ENCODE measurements at regions of chr5 and their contacts with region 1.

Region 1: GRCh38 chr5:139968547-139969261 is 74.4 kb downstream of the NRG2 start:
- DNase-seq: peak; percentile 74 to 99
- H3K4me3 ChIP-seq: no peak overlapping the region
- H3K27ac ChIP-seq: no peak overlapping the region
- H3K4me1 ChIP-seq: no peaks in the 10 kb centered on the region
- H3K27me3 ChIP-seq: no peaks in the 10 kb centered on the region; a peak in 1 of 7 replicates
- CTCF ChIP-seq: peak; percentile 100
- EP300 ChIP-seq: peak in 1 of 2 experiments; percentile 55; a peak in 1 of 3 replicates
- POLR2A ChIP-seq: no peak
- RAD21 ChIP-seq: peak; percentile 99 to 100

Region 2: DNA sequence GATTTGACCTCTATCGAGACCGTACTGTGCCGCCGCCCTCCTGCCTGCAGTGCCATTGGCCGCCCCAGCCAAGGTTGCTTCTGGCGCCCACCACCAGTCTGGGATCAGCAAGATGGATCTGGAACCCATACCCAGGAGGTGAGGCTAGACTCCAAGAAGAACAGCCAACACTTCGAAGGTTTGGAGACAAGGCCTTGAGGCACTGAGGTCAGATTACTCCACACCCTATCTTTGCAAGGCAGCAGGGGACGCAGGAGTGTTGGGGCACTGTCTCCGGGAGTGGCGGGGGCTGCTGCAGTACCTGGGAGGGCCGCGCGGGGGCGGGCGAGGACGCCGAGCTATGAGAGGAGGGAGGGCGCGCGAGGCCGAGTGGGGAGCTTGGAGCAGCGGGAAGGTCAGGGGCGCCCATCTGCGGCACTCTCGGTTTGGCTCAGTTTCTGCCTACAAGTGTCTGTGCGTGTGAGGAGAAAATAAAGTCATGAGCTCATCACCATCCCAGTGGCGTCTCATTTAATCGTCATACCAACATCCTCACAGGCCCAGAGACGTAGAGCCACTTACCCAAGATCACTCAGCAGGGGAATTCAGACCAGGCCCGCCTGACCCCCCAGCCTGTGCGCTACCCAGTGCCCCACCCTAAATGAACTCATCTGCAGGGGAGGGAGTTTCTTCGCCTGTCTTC is 193.6 kb before region 1 on chr5:
- CTCF ChIA-PET with region 1: interaction called, 35 read pairs
- POLR2A ChIA-PET with region 1: interaction called, 3 read pairs
- DNase-seq: peak; percentile 63 to 100
- H3K4me3 ChIP-seq: peak overlapping the region in 1 of 4 experiments; percentile 28; a peak in 1 of 8 replicates
- H3K27ac ChIP-seq: no peak overlapping the region
- H3K4me1 ChIP-seq: peaks cover 0 to 5% (median 4%) of the 10 kb centered on the region in 4 experiments; a peak in 4 of 7 replicates
- H3K27me3 ChIP-seq: peaks cover 0 to 5% (median 2%) of the 10 kb centered on the region in 4 experiments; a peak in 3 of 7 replicates
- CTCF ChIP-seq: peak in 2 of 3 experiments; percentile 96 to 97; a peak in 3 of 4 replicates
- EP300 ChIP-seq: no peak
- POLR2A ChIP-seq: no peak
- RAD21 ChIP-seq: peak; percentile 61 to 73

Region 3: GRCh38 chr5:139837631-139838422 is 130.9 kb before region 1 on chr5:
- CTCF ChIA-PET with region 1: interaction called, 66 read pairs
- POLR2A ChIA-PET with region 1: no interaction called
- DNase-seq: no peak
- H3K4me3 ChIP-seq: no peak overlapping the region
- H3K27ac ChIP-seq: no peak overlapping the region
- H3K4me1 ChIP-seq: no peaks in the 10 kb centered on the region
- H3K27me3 ChIP-seq: peaks cover 0 to 4% (median 0%) of the 10 kb centered on the region in 4 experiments; a peak in 2 of 7 replicates
- CTCF ChIP-seq: peak in 1 of 3 experiments; percentile 8; a peak in 1 of 4 replicates
- EP300 ChIP-seq: no peak
- POLR2A ChIP-seq: no peak
- RAD21 ChIP-seq: no peak

Region 4: DNA sequence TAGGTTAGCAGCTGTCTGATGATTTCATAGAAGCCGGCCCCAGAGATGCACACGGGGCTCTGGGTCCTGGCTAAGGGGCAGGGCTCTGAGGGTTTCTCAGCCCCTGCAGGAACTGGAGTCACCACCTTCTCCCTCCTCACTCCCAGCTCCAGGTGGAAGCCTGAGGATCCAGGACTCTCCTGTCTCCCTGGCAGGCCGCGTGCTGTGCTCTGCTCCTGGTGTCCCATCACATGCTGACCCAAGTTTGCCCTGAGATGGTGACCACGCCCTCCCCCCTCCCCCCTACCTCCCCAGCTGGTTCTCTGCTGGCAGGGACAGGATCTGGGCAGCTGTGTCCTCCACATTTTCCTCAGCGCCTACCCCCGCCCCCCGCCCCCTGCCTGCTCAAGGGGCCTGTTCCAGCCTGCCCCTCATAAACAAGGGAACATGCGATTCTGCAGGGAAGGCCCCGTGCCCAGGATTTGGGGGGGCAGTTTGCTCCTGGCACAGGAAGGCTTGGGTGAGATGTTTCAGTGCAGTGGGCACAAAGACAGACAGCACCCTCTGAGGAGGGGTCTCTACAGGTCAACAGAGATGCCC is 85.7 kb before region 1 on chr5:
- CTCF ChIA-PET with region 1: interaction called, 50 read pairs
- POLR2A ChIA-PET with region 1: no interaction called
- DNase-seq: no peak
- H3K4me3 ChIP-seq: no peak overlapping the region
- H3K27ac ChIP-seq: no peak overlapping the region
- H3K4me1 ChIP-seq: peaks cover 0 to 9% (median 0%) of the 10 kb centered on the region in 4 experiments; a peak in 3 of 7 replicates
- H3K27me3 ChIP-seq: peaks cover 0 to 2% (median 0%) of the 10 kb centered on the region in 4 experiments; a peak in 2 of 7 replicates
- CTCF ChIP-seq: no peak
- EP300 ChIP-seq: no peak
- POLR2A ChIP-seq: no peak
- RAD21 ChIP-seq: no peak

Region 5: GRCh38 chr5:139925650-139926640 is 42.8 kb before region 1 on chr5:
- CTCF ChIA-PET with region 1: interaction called, 14 read pairs
- POLR2A ChIA-PET with region 1: no interaction called
- DNase-seq: peak in 1 of 2 experiments; percentile 38
- H3K4me3 ChIP-seq: no peak overlapping the region
- H3K27ac ChIP-seq: no peak overlapping the region
- H3K4me1 ChIP-seq: peaks cover 0 to 2% (median 0%) of the 10 kb centered on the region in 4 experiments; a peak in 1 of 7 replicates
- H3K27me3 ChIP-seq: no peaks in the 10 kb centered on the region; a peak in 3 of 7 replicates
- CTCF ChIP-seq: no peak
- EP300 ChIP-seq: no peak
- POLR2A ChIP-seq: no peak
- RAD21 ChIP-seq: no peak

Region 6: DNA sequence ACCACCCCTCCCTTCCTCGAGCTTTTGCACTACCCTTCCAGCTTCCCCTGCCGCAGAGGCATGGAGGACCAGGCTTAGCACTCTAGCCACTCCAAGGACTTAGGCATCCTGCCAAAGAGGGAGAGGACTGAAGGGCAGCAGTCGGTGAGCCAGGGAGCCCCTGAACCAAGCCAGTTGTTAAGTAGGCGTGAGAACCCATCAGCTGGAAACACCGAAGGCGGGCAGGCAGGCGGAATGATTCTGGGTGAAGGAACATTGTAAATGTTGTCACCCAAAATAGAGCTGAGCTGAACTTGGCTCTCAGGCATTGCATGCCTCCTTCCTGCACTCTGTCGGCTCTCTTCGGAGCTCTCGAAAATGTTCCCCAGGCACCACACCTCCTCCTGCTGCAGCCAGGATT is 31.6 kb after region 1 on chr5:
- CTCF ChIA-PET with region 1: interaction called, 35 read pairs
- POLR2A ChIA-PET with region 1: no interaction called
- DNase-seq: no peak
- H3K4me3 ChIP-seq: no peak overlapping the region
- H3K27ac ChIP-seq: no peak overlapping the region
- H3K4me1 ChIP-seq: no peaks in the 10 kb centered on the region
- H3K27me3 ChIP-seq: 0 out of 7 replicates have a peak, but pooled peaks cover 0 to 2% (median 0%) of the 10 kb centered on the region in 4 experiments
- CTCF ChIP-seq: no peak
- EP300 ChIP-seq: no peak
- POLR2A ChIP-seq: no peak
- RAD21 ChIP-seq: no peak